CD4-positive, alpha-beta memory T cell (primary cell): ENCODE measurements at regions of chr5 and their contacts with region 1.

Region 1: GRCh38 chr5:115098041-115098702 is 71.5 kb downstream of the TRIM36 start:
- DNase-seq: peak in 4 of 5 donors; percentile 16 to 28 (median 21)
- H3K4me3 ChIP-seq: no peak overlapping the region
- H3K4me3 Mint-ChIP-seq: no peak overlapping the region
- H3K27ac ChIP-seq: no peak overlapping the region
- H3K27ac Mint-ChIP-seq: no peak overlapping the region
- H3K4me1 ChIP-seq: no peaks in the 10 kb centered on the region
- H3K4me1 Mint-ChIP-seq: no peaks in the 10 kb centered on the region
- H3K27me3 ChIP-seq: no peaks in the 10 kb centered on the region
- H3K27me3 Mint-ChIP-seq: peaks cover 6 to 11% of the 10 kb centered on the region in 2 donors

Region 2: GRCh38 chr5:115246361-115246991 is 148.3 kb after region 1 on chr5:
- CTCF ChIA-PET with region 1: interaction called, 11 read pairs
- POLR2A ChIA-PET with region 1: no interaction called
- intact Hi-C with region 1: loop called (anchors 1 kb)
- DNase-seq: peak in 4 of 5 donors; percentile 27 to 40 (median 28)
- H3K4me3 ChIP-seq: no peak overlapping the region
- H3K4me3 Mint-ChIP-seq: no peak overlapping the region
- H3K27ac ChIP-seq: no peak overlapping the region
- H3K27ac Mint-ChIP-seq: no peak overlapping the region
- H3K4me1 ChIP-seq: no peaks in the 10 kb centered on the region
- H3K4me1 Mint-ChIP-seq: peaks cover 10 to 36% (median 21%) of the 10 kb centered on the region in 4 donors
- H3K27me3 ChIP-seq: no peaks in the 10 kb centered on the region
- H3K27me3 Mint-ChIP-seq: no peaks in the 10 kb centered on the region

Region 3: DNA sequence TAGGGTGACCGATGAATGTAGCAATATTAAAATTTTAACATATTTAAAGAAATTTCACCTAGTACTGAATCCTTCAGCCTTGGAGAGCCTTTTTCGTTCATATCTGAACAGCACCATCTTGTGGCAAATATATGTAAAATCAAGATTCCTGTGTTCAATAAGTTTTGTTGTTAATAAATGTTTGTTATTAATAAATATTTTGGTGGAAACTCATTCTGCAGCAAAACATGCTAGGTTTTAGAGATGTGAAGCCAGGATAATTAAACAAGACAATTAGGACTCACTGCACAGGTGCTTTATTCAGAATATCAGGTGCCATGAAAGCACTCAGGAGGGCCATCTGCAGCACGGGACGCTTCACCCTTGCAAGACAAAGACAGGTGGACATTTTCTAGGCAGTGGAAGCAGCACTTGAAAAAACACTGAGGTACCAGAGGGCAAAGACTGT is 488.5 kb after region 1 on chr5:
- CTCF ChIA-PET with region 1: no interaction called
- POLR2A ChIA-PET with region 1: no interaction called
- intact Hi-C with region 1: loop called (anchors 1 kb)
- DNase-seq: peak in 4 of 5 donors; percentile 19 to 37 (median 30)
- H3K4me3 ChIP-seq: no peak overlapping the region
- H3K4me3 Mint-ChIP-seq: no peak overlapping the region
- H3K27ac ChIP-seq: no peak overlapping the region
- H3K27ac Mint-ChIP-seq: no peak overlapping the region
- H3K4me1 ChIP-seq: no peaks in the 10 kb centered on the region
- H3K4me1 Mint-ChIP-seq: no peaks in the 10 kb centered on the region
- H3K27me3 ChIP-seq: no peaks in the 10 kb centered on the region
- H3K27me3 Mint-ChIP-seq: no peaks in the 10 kb centered on the region

Region 4: GRCh38 chr5:116068028-116068632 is 970.0 kb after region 1 on chr5:
- CTCF ChIA-PET with region 1: no interaction called
- POLR2A ChIA-PET with region 1: no interaction called
- intact Hi-C with region 1: loop called (anchors 2 kb)
- DNase-seq: peak in 4 of 5 donors; percentile 32 to 46 (median 34)
- H3K4me3 ChIP-seq: no peak overlapping the region
- H3K4me3 Mint-ChIP-seq: no peak overlapping the region
- H3K27ac ChIP-seq: no peak overlapping the region
- H3K27ac Mint-ChIP-seq: no peak overlapping the region
- H3K4me1 ChIP-seq: no peaks in the 10 kb centered on the region
- H3K4me1 Mint-ChIP-seq: no peaks in the 10 kb centered on the region
- H3K27me3 ChIP-seq: peaks cover 13% of the 10 kb centered on the region
- H3K27me3 Mint-ChIP-seq: peaks cover 16 to 22% of the 10 kb centered on the region in 2 donors